WTC11 (cell line): ENCODE measurements at regions of chr9 and their contacts with region 1.

Region 1: GRCh38 chr9:4548811-4549725 is 58.8 kb downstream of the SLC1A1 start:
- DNase-seq: peak; percentile 78
- ATAC-seq: peak; percentile 99
- H3K4me3 Mint-ChIP-seq: no peak overlapping the region
- H3K27ac Mint-ChIP-seq: no peak overlapping the region
- H3K4me1 Mint-ChIP-seq: peaks cover 11% of the 10 kb centered on the region
- H3K27me3 Mint-ChIP-seq: no peaks in the 10 kb centered on the region
- CTCF ChIP-seq: peak; percentile 42; the same call in 1 of the 2 replicates

Region 2: GRCh38 chr9:4382722-4383317 is 166.2 kb before region 1 on chr9:
- CTCF ChIA-PET with region 1: interaction called, 76 read pairs
- POLR2A ChIA-PET with region 1: no interaction called
- DNase-seq: no peak
- ATAC-seq: peak; percentile 60
- H3K4me3 Mint-ChIP-seq: no peak overlapping the region
- H3K27ac Mint-ChIP-seq: no peak overlapping the region
- H3K4me1 Mint-ChIP-seq: no peaks in the 10 kb centered on the region
- H3K27me3 Mint-ChIP-seq: no peaks in the 10 kb centered on the region
- CTCF ChIP-seq: no peak; the same call in 1 of the 2 replicates

Region 3: DNA sequence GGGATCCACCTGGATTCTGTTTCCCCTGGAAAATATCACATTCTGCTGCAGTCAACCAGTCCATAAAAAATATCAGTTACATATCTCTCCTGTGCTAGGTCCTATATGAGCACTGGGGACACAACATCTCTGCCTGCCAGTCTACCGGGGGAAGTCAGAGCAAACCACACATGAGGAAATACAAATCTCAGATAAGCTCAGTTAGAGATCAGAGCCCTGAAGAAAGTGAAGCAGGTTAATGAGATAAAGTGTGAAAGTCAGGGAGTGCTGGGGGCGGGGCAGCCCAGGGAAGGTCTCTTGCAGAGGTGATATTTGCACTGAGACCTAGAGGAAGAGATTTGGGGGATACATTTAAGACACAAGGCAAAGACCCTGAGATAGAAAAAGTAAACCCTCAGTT is 126.6 kb before region 1 on chr9:
- CTCF ChIA-PET with region 1: interaction called, 13 read pairs
- POLR2A ChIA-PET with region 1: no interaction called
- DNase-seq: no peak
- ATAC-seq: no peak
- H3K4me3 Mint-ChIP-seq: no peak overlapping the region
- H3K27ac Mint-ChIP-seq: no peak overlapping the region
- H3K4me1 Mint-ChIP-seq: peaks cover 18% of the 10 kb centered on the region
- H3K27me3 Mint-ChIP-seq: no peaks in the 10 kb centered on the region
- CTCF ChIP-seq: no peak

Region 4: DNA sequence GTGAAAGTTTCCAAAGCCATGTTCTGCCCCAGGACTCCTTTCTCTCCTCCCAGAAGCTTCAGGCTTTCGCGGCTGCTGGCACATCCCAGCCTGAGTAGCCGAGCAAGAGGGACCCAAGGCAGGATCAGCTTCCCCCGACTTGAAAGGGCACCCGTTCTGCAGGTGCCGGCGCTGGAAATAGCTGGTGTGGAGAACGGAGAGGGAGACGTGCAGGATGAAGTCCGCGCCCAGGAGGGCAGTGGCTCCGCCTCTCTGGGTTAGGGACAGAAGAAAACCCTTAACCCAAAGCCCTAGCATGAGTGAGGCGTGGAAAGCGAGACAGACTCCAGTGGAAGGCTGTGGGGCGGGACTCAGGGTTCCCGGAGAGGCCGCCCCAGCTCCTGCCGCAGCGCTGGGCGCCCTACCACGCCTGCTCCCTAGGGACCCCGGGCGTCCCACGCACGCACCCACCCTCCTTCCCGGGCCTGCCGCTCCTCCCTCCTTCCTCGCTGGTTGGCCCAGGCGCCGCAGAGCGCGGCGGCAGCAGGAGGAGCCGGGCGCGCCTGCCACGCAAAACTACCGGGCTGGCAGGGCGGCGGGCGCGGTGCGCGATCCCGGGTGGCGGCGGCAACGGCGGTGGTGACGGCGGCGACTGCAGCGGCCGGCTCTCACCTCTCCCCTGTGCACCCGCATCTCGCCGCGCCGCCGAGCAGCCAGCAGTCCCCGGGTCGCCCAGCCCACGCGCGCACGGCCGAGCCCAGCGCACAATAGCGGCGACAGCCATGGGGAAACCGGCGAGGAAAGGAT is 59.0 kb before region 1 on chr9 and contains the start of gene SLC1A1:
- CTCF ChIA-PET with region 1: interaction called, 41 read pairs
- POLR2A ChIA-PET with region 1: interaction called, 12 read pairs
- DNase-seq: peak; percentile 69
- ATAC-seq: peak; percentile 75
- H3K4me3 Mint-ChIP-seq: peak within 1 kb of the TSS; percentile 95
- H3K27ac Mint-ChIP-seq: peak within 1 kb of the TSS; percentile 70; the same call in 1 of the 2 replicates
- H3K4me1 Mint-ChIP-seq: peaks cover 45% of the 10 kb centered on the region
- H3K27me3 Mint-ChIP-seq: peaks cover 28% of the 10 kb centered on the region
- CTCF ChIP-seq: no peak
- total RNA-seq, gene SLC1A1: 7.0 to 8.5 TPM (median 7.1 TPM) in 3 replicates

Region 5: DNA sequence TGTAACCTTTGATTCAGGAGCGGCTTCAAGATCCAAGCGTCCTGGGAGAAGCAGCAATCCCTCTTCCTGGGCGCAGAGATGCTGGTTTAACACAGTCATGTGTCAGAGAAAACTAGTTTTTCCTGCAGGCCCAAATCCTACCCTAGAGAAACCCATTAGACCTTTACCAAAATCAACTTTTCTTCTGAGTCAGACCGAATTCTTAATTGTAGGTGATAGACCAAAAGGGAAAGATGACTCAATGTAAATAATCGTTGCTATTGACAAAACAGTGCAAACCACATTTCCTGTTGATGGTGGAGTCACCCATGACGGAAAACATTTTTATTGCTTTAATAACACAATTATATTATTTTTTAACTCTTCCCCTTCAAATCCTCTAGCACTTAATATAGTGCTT is 18.7 kb before region 1 on chr9:
- CTCF ChIA-PET with region 1: interaction called, 12 read pairs
- POLR2A ChIA-PET with region 1: no interaction called
- DNase-seq: no peak
- ATAC-seq: no peak
- H3K4me3 Mint-ChIP-seq: no peak overlapping the region
- H3K27ac Mint-ChIP-seq: no peak overlapping the region
- H3K4me1 Mint-ChIP-seq: peaks cover 28% of the 10 kb centered on the region
- H3K27me3 Mint-ChIP-seq: no peaks in the 10 kb centered on the region; the same call in none of the 2 replicates
- CTCF ChIP-seq: no peak